ENCODE measurements at regions of chr9 and their contacts with region 1.

Region 1: GRCh38 chr9:126490871-126491567 is 122.7 kb upstream of the LMX1B start:
- DNase-seq: peak; percentile 43
- H3K4me3 Mint-ChIP-seq: no peak overlapping the region
- H3K27ac Mint-ChIP-seq: no peak overlapping the region
- H3K4me1 Mint-ChIP-seq: no peaks in the 10 kb centered on the region
- H3K27me3 Mint-ChIP-seq: peaks cover 10% of the 10 kb centered on the region

Region 2: GRCh38 chr9:125558453-125559092 is 932.4 kb before region 1 on chr9:
- intact Hi-C with region 1: loop called (anchors 1 kb)
- DNase-seq: peak; percentile 31
- H3K4me3 Mint-ChIP-seq: no peak overlapping the region
- H3K27ac Mint-ChIP-seq: no peak overlapping the region
- H3K4me1 Mint-ChIP-seq: peaks cover 18% of the 10 kb centered on the region
- H3K27me3 Mint-ChIP-seq: no peaks in the 10 kb centered on the region

Region 3: GRCh38 chr9:125867751-125868415 is 623.1 kb before region 1 on chr9:
- intact Hi-C with region 1: no loop called
- DNase-seq: no peak
- H3K4me3 Mint-ChIP-seq: no peak overlapping the region
- H3K27ac Mint-ChIP-seq: no peak overlapping the region
- H3K4me1 Mint-ChIP-seq: no peaks in the 10 kb centered on the region
- H3K27me3 Mint-ChIP-seq: no peaks in the 10 kb centered on the region

Region 4: GRCh38 chr9:126125177-126125972 is 365.6 kb before region 1 on chr9:
- intact Hi-C with region 1: no loop called
- DNase-seq: no peak
- H3K4me3 Mint-ChIP-seq: no peak overlapping the region
- H3K27ac Mint-ChIP-seq: no peak overlapping the region
- H3K4me1 Mint-ChIP-seq: no peaks in the 10 kb centered on the region
- H3K27me3 Mint-ChIP-seq: peaks cover 7% of the 10 kb centered on the region

Region 5: GRCh38 chr9:126228781-126229444 is 262.1 kb before region 1 on chr9:
- intact Hi-C with region 1: loop called (anchors 1 kb)
- DNase-seq: peak; percentile 40
- H3K4me3 Mint-ChIP-seq: no peak overlapping the region
- H3K27ac Mint-ChIP-seq: no peak overlapping the region
- H3K4me1 Mint-ChIP-seq: peaks cover 6% of the 10 kb centered on the region
- H3K27me3 Mint-ChIP-seq: peaks cover 20% of the 10 kb centered on the region

Region 6: DNA sequence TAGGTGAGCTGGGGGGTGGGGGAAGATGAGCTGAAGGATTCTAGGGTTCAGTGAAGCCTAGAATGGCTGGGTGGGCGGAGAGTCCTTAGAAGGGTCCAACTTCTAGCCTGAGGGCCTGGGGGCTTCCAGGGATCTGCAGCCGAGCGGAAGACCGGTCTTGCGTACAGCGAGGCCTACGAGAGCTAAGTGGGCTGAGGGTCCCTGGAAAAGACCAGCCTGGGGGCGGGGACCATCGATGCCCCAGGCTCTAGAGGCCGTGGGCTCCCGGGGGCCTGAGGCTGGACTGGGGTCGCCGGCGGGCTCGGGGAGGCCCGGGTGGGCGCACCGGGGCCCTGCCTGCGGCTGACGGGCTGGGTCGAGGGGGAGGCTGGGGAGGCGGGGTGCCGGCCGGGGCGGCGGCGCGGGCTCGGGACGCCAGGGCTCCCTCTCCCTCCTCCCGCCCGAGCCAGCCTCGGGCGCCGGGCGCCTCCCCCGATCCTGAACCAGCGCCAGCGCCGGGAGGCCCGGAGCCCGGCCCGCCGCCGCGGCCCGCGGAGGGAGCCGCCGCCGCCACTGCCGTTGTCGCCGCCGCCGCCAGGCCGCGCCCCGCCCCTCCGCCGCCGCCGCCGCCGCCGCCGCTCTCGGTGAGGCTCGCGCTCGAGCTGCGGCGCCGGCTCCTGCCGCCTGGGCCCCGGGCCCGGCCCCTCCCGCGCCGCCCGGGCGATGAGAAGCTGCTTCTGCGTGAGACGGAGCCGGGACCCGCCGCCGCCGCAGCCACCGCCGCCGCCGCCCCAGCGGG is 164.6 kb before region 1 on chr9 and contains the start of gene MVB12B:
- intact Hi-C with region 1: loop called (anchors 5 kb)
- DNase-seq: peak; percentile 35
- H3K4me3 Mint-ChIP-seq: peak within 1 kb of the TSS; percentile 77
- H3K27ac Mint-ChIP-seq: peak within 1 kb of the TSS; percentile 54
- H3K4me1 Mint-ChIP-seq: peaks cover 18% of the 10 kb centered on the region
- H3K27me3 Mint-ChIP-seq: peaks cover 25% of the 10 kb centered on the region
- total RNA-seq, gene MVB12B: 1.1 and 1.9 TPM in 2 replicates

Region 7: GRCh38 chr9:126456441-126457174 is 34.4 kb before region 1 on chr9:
- intact Hi-C with region 1: no loop called
- DNase-seq: no peak
- H3K4me3 Mint-ChIP-seq: no peak overlapping the region
- H3K27ac Mint-ChIP-seq: no peak overlapping the region
- H3K4me1 Mint-ChIP-seq: no peaks in the 10 kb centered on the region
- H3K27me3 Mint-ChIP-seq: peaks cover 11% of the 10 kb centered on the region

Region 8: GRCh38 chr9:126503329-126504090 is 12.5 kb after region 1 on chr9:
- intact Hi-C with region 1: no loop called
- DNase-seq: no peak
- H3K4me3 Mint-ChIP-seq: no peak overlapping the region
- H3K27ac Mint-ChIP-seq: no peak overlapping the region
- H3K4me1 Mint-ChIP-seq: no peaks in the 10 kb centered on the region
- H3K27me3 Mint-ChIP-seq: peaks cover 20% of the 10 kb centered on the region